Naive thymus-derived CD4-positive, alpha-beta T cell (primary cell): ENCODE measurements at regions of chr14 and their contacts with region 1.

Region 1: GRCh38 chr14:71753126-71753830 is 179.0 kb upstream of the RGS6 start:
- DNase-seq: peak; percentile 29 to 67 (median 57)
- ATAC-seq: peak; percentile 66
- H3K4me3 ChIP-seq: no peak overlapping the region
- H3K4me3 Mint-ChIP-seq: peak overlapping the region in 3 of 10 donors; percentile 3 to 34 (median 21)
- H3K27ac ChIP-seq: no peak overlapping the region
- H3K27ac Mint-ChIP-seq: no peak overlapping the region
- H3K4me1 ChIP-seq: no peaks in the 10 kb centered on the region
- H3K4me1 Mint-ChIP-seq: peaks cover 0 to 18% (median 0%) of the 10 kb centered on the region in 7 donors
- H3K27me3 ChIP-seq: no peaks in the 10 kb centered on the region
- H3K27me3 Mint-ChIP-seq: peaks cover 0 to 5% (median 0%) of the 10 kb centered on the region in 5 donors

Region 2: GRCh38 chr14:71050204-71050823 is 703.0 kb before region 1 on chr14:
- CTCF ChIA-PET with region 1: no interaction called
- POLR2A ChIA-PET with region 1: no interaction called
- intact Hi-C with region 1: loop called in 1 of 2 experiments (anchors 5 kb)
- DNase-seq: peak in 1 of 9 donors; percentile 3
- ATAC-seq: peak; percentile 51
- H3K4me3 ChIP-seq: no peak overlapping the region
- H3K4me3 Mint-ChIP-seq: no peak overlapping the region
- H3K27ac ChIP-seq: no peak overlapping the region
- H3K27ac Mint-ChIP-seq: no peak overlapping the region
- H3K4me1 ChIP-seq: no peaks in the 10 kb centered on the region
- H3K4me1 Mint-ChIP-seq: peaks cover 0 to 25% (median 15%) of the 10 kb centered on the region in 7 donors
- H3K27me3 ChIP-seq: no peaks in the 10 kb centered on the region
- H3K27me3 Mint-ChIP-seq: no peaks in the 10 kb centered on the region

Region 3: DNA sequence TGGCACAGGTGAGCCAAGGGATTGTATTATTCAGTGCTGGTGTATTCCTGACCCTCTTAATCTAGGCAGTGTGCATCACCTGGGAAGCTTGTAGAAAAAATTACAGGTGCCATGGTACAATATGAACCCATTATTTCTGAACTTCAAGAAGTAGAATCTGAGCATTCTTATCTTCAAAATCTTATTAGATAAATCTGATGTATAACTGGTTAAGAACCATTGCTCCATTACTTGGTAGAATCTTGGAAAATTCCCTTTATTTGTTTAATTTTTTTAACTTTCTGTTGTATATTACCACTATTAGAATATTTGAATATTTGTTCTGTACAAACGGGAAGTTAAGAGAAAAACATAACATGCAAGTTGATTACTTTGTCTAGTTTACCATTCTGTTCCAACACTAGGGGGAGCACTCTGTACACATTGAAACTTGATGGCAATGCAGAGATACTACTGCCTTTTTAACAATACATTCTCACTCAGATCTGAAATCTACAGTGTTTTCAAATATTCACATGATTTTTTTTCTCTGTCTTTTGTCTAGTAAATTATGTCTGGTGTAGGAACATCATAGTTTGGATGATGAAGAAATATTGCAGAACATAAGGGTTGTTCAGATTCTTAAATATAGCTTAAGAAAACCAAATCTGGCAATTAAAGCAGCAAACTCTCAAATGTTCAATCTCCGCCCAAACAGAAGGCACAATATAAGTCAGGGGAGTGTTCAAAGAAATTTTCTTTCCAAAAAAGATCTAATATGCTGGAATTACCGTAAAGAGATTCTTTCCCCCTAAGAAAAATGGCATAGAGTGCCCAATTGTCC is 649.4 kb before region 1 on chr14:
- CTCF ChIA-PET with region 1: interaction called, 8 read pairs
- POLR2A ChIA-PET with region 1: no interaction called
- intact Hi-C with region 1: loop called (anchors 1 kb)
- DNase-seq: peak in 7 of 9 donors; percentile 11 to 52 (median 42)
- ATAC-seq: peak; percentile 74
- H3K4me3 ChIP-seq: no peak overlapping the region
- H3K4me3 Mint-ChIP-seq: no peak overlapping the region
- H3K27ac ChIP-seq: no peak overlapping the region
- H3K27ac Mint-ChIP-seq: peak overlapping the region in 2 of 9 donors; percentile 8 to 25
- H3K4me1 ChIP-seq: no peaks in the 10 kb centered on the region
- H3K4me1 Mint-ChIP-seq: peaks cover 1 to 14% (median 8%) of the 10 kb centered on the region in 7 donors
- H3K27me3 ChIP-seq: no peaks in the 10 kb centered on the region
- H3K27me3 Mint-ChIP-seq: no peaks in the 10 kb centered on the region

Region 4: DNA sequence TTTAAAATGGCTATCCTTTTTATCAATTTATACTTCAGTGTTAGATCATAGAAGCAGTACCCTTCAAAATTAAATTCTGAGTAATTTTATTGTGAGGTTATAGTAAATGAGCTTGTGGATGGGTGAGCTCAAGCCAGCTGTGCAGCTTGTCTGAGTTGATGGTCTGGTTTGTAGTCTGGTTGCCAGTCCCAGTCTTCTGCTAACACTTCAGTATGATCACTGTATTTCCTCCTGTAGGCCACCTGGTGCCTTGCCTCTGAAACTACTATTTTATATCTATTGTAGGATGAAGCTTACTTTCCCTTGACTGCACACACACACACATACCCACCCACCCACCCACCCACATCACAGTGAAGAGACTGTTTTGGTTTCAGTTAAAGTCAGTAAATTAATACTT is 349.6 kb before region 1 on chr14:
- CTCF ChIA-PET with region 1: no interaction called
- POLR2A ChIA-PET with region 1: no interaction called
- intact Hi-C with region 1: loop called in 1 of 2 experiments (anchors 5 kb)
- DNase-seq: peak in 7 of 9 donors; percentile 31 to 64 (median 44)
- ATAC-seq: peak; percentile 51
- H3K4me3 ChIP-seq: no peak overlapping the region
- H3K4me3 Mint-ChIP-seq: no peak overlapping the region
- H3K27ac ChIP-seq: no peak overlapping the region
- H3K27ac Mint-ChIP-seq: peak overlapping the region in 6 of 9 donors; percentile 33 to 74 (median 56)
- H3K4me1 ChIP-seq: peaks cover 0 to 15% of the 10 kb centered on the region in 2 donors
- H3K4me1 Mint-ChIP-seq: peaks cover 17 to 47% (median 34%) of the 10 kb centered on the region in 7 donors
- H3K27me3 ChIP-seq: no peaks in the 10 kb centered on the region
- H3K27me3 Mint-ChIP-seq: no peaks in the 10 kb centered on the region